ENCODE measurements at regions of chr12 and their contacts with region 1.

Region 1: DNA sequence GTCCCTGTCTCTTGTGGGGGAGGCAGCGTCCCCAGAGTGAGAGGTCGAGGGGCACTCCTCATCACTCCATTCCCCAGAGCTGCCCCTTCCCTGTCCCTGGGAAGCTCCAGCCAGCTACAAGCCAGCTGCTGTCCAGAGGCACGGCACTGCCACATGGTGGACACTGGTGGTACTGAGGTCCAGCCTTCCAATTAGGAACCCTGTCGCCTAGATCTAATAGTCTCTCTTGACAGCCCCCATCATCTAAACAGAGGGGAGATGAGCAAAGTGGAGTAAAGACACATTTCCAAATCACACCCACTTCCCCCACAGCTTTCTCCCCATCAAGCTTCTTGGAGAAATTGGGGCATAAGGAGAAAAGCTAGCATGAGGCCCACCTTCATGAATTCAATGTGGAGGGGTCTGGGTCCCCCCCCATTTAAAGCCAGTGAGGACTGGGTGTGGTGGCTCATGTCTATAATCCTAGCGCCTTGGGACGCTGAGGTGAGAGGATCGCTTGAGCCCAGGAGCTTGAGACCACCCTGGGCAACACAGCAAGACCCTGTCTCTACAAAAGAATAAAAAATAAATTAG is 2.1 kb upstream of the INHBE start:
- DNase-seq: peak; percentile 78
- H3K4me3 Mint-ChIP-seq: no peak overlapping the region
- H3K27ac Mint-ChIP-seq: no peak overlapping the region
- H3K4me1 Mint-ChIP-seq: peaks cover 29% of the 10 kb centered on the region
- H3K27me3 Mint-ChIP-seq: no peaks in the 10 kb centered on the region
- CTCF ChIP-seq: peak; percentile 88

Region 2: DNA sequence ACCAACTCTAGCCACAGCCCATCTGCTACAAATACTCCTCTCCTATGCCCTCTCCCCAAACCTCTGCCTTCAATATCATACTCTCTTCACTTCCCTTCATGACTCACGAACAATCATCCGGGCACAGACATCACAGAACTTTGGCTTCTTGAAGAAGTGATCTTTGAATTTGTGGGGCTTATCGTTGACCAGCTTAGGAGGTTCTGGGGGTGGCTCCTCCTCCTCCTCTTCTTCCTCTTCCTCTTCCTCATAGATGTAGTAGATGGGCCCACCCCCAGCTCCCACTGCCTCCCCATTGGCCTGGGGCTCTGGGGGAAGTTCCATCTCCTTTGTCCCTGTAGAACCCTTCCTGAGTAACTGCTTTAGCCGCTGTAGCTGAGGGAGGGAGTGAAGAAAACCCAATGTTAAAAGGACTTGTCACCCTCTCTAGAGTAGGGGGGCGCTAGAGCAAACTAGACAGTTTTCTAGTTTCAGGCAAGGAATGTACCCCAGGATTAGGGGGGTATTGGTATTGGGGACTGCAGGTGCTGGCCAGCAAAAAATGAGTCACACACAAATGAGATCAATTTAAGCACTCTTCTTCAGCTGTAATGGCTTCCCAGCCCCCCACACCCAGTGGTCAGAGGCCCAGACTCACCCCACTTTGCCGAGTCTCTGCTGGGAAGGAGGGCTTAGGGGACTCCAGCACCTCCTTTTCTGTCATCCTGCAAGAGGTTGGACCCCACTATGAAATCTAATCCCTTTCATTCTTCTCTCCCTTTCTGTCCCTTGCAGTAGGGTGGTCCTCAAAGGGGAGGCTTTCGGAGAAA is 203.9 kb before region 1 on chr12:
- CTCF ChIA-PET with region 1: interaction called, 12 read pairs
- POLR2A ChIA-PET with region 1: no interaction called
- intact Hi-C with region 1: no loop called
- DNase-seq: no peak
- H3K4me3 Mint-ChIP-seq: no peak overlapping the region
- H3K27ac Mint-ChIP-seq: no peak overlapping the region
- H3K4me1 Mint-ChIP-seq: peaks cover 8% of the 10 kb centered on the region
- H3K27me3 Mint-ChIP-seq: no peaks in the 10 kb centered on the region
- CTCF ChIP-seq: no peak

Region 3: DNA sequence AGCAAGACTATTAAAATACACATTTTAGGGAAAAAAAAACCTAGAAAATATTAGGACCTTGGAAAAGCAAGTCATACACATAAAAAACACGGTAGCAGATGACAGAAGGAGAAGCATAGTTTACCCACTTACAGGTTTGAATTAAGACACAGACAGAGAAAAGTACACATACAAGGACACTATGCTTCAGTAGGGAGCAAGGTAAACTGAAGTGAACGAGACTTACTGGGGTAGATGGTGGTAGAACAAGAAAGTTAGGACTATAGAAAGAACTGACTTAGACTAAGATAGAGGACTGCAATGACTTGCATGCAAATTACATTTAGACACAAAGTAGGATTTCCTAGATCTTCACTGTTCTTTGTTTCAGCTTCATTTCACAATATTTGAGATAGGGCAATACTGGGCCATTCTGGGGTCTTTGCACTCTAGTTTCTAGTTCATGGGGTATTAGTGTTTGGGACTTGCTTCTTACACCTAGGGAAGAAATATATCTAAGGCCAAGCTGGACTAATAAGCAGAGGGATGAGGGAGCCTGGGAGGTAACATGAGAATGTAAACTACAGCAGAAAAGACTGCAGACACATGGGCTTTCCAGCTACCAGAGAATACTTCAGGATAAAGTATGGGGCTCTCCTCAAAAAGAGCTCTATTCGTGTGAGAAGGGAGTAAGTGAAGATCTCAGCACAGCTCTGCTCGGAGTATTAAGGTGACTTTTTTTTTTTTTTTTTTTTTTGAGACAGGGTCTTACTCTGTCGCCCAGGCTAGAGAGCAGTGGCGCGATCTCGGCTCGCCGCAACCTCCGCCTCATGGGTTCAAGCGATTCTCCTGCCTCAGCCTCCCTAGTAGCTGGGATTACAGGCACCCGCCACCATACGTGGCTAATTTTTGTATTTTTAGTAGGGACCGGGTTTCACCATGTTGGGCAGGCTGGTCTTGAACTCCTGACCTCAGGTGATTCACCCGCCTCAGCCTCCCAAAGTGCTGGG is 174.3 kb before region 1 on chr12:
- CTCF ChIA-PET with region 1: interaction called, 11 read pairs
- POLR2A ChIA-PET with region 1: no interaction called
- intact Hi-C with region 1: no loop called
- DNase-seq: no peak
- H3K4me3 Mint-ChIP-seq: no peak overlapping the region
- H3K27ac Mint-ChIP-seq: no peak overlapping the region
- H3K4me1 Mint-ChIP-seq: peaks cover 14% of the 10 kb centered on the region
- H3K27me3 Mint-ChIP-seq: no peaks in the 10 kb centered on the region
- CTCF ChIP-seq: no peak

Region 4: GRCh38 chr12:57332646-57333312 is 120.2 kb before region 1 on chr12:
- CTCF ChIA-PET with region 1: interaction called, 17 read pairs
- POLR2A ChIA-PET with region 1: interaction called, 3 read pairs
- intact Hi-C with region 1: no loop called
- DNase-seq: no peak
- H3K4me3 Mint-ChIP-seq: no peak overlapping the region
- H3K27ac Mint-ChIP-seq: no peak overlapping the region
- H3K4me1 Mint-ChIP-seq: no peaks in the 10 kb centered on the region
- H3K27me3 Mint-ChIP-seq: no peaks in the 10 kb centered on the region
- CTCF ChIP-seq: no peak

Region 5: DNA sequence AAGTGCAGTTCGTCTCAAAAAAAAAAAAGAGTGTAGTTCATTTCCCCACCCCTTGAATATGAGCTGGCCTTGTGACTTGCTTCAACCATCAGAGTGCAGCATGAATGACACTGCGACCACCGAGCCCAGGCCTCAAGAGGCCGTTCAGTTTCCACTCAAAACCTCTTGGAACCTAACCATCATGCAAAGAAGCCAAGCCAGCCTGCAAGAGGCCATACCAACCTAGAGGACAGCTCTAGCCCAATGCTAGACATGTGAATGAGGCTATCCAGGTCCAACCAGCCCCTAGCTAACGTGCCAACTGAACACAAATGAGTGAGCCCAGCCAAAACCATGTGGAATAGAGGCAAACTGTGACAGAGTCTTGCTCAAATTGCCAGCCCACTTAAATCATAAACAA is 51.9 kb before region 1 on chr12:
- CTCF ChIA-PET with region 1: interaction called, 10 read pairs
- POLR2A ChIA-PET with region 1: no interaction called
- intact Hi-C with region 1: no loop called
- DNase-seq: no peak
- H3K4me3 Mint-ChIP-seq: no peak overlapping the region
- H3K27ac Mint-ChIP-seq: no peak overlapping the region
- H3K4me1 Mint-ChIP-seq: no peaks in the 10 kb centered on the region
- H3K27me3 Mint-ChIP-seq: no peaks in the 10 kb centered on the region
- CTCF ChIP-seq: no peak

Region 6: GRCh38 chr12:57441846-57442427 is 11.1 kb before region 1 on chr12:
- CTCF ChIA-PET with region 1: interaction called, 53 read pairs
- POLR2A ChIA-PET with region 1: no interaction called
- intact Hi-C with region 1: no loop called
- DNase-seq: no peak
- H3K4me3 Mint-ChIP-seq: no peak overlapping the region
- H3K27ac Mint-ChIP-seq: no peak overlapping the region
- H3K4me1 Mint-ChIP-seq: no peaks in the 10 kb centered on the region
- H3K27me3 Mint-ChIP-seq: no peaks in the 10 kb centered on the region
- CTCF ChIP-seq: no peak

Measured in MCF 10A (cell line).